ENCODE measurements at regions of chr16 and their contacts with region 1.

Region 1: GRCh38 chr16:48146710-48147109 is 9.1 kb downstream of the ABCC12 start:
- DNase-seq: no peak

Region 2: GRCh38 chr16:48133455-48134211 is 13.1 kb before region 1 on chr16:
- intact Hi-C with region 1: loop called (anchors 1 kb)
- DNase-seq: no peak

Region 3: GRCh38 chr16:48609652-48610029 is 462.9 kb after region 1 on chr16:
- intact Hi-C with region 1: no loop called
- DNase-seq: peak in 14 of 42 donors; percentile 32 to 73 (median 53)

Measured in head of caudate nucleus (tissue), 42 donors.